AG04450 (cell line): ENCODE measurements at regions of chr2 and their contacts with region 1.

Region 1: GRCh38 chr2:47208852-47209606 is 53.9 kb upstream of the STPG4 start:
- DNase-seq: no peak
- H3K4me3 ChIP-seq: no peak overlapping the region
- H3K27ac ChIP-seq: peak overlapping the region; percentile 71
- H3K27me3 ChIP-seq: no peaks in the 10 kb centered on the region
- CTCF ChIP-seq: no peak

Region 2: DNA sequence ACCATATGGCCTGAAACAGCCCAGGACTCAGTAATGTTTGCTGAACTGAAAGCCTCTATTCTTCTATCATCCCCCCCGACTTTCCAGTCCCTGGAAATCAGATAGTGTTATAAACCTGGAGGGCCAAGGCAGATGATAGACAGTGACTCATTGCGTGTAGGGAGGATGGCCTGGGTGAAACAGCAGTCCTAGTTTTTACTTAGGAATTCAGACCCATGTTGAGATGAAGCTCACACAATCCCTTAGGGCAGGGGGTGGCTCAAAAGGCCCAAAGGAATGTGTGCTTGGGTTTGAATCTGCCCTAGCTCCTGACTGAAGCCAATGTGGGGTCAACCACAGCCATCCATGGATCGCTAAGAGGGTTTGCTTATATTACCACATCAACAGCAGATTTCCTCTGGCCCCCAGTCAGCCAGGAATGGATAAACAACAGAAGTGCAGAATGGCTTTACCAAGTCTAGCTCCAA is 10.0 kb before region 1 on chr2:
- CTCF ChIA-PET with region 1: no interaction called
- POLR2A ChIA-PET with region 1: interaction called, 10 read pairs
- DNase-seq: peak; percentile 99
- H3K4me3 ChIP-seq: no peak overlapping the region; the same call in 1 of the 2 replicates
- H3K27ac ChIP-seq: peak overlapping the region; percentile 80
- H3K27me3 ChIP-seq: no peaks in the 10 kb centered on the region
- CTCF ChIP-seq: no peak